ENCODE measurements at regions of chr15 and their contacts with region 1.

Region 1: DNA sequence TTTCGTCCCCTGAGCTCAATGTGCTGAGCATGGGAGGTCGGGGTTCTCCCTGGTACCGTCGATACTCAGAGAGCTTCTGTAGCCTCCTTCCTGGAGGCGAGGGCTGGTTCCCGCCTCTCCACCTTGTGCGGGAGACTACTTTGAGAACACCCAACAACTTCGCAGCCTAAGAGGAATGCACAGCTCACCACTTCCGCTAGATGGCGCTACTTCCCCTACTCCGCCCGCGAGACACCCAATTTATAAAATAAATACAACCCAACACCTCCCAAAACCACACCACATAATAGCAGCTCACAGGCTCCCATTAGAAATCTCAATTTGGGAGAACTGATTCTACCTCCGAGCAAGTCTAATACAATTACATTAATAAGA is 1.2 kb downstream of the RGMA start:
- DNase-seq: peak; percentile 68 to 87
- ATAC-seq: peak; percentile 61 to 71 (median 69)
- H3K4me3 ChIP-seq: peak overlapping the region; percentile 80
- H3K27ac ChIP-seq: peak overlapping the region; percentile 90
- H3K4me1 ChIP-seq: peaks cover 37% of the 10 kb centered on the region
- H3K27me3 ChIP-seq: peaks cover 0 to 3% (median 0%) of the 10 kb centered on the region in 3 donors
- CTCF ChIP-seq: peak; percentile 95

Region 2: DNA sequence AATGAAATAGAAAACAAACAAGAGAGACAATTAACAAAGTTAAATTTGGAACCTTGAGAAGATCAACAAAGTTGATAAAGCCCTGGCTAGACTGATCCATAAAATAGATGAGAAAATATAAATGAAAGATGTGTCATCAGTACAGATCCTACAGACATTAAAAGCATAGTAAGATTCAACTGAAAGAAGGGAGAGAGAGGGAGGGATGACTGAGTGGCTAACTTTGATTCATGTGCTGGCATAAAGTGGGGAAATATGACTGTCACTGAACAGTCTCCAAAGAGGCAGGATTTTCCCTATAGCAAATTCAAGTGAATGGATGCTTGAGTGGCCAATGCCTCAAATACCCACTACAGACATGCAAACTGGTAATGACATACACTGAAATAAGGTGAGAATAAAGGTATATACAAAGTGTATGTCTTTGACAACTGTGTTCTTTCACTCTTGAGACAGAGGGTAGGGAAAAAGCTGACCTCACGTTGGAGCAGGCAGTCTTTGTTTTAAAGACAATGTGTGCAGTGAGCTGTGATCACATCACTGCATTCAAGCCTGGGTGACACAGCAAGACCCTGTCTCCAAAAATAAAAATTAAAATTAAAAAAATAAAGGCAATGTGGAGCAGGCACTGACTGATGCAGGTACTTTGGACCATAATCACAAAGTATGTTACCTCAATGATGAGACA is 223.5 kb before region 1 on chr15:
- intact Hi-C with region 1: no loop called
- DNase-seq: no peak
- ATAC-seq: no peak
- H3K4me3 ChIP-seq: no peak overlapping the region
- H3K27ac ChIP-seq: no peak overlapping the region
- H3K4me1 ChIP-seq: peaks cover 6% of the 10 kb centered on the region
- H3K27me3 ChIP-seq: no peaks in the 10 kb centered on the region
- CTCF ChIP-seq: no peak

Region 3: DNA sequence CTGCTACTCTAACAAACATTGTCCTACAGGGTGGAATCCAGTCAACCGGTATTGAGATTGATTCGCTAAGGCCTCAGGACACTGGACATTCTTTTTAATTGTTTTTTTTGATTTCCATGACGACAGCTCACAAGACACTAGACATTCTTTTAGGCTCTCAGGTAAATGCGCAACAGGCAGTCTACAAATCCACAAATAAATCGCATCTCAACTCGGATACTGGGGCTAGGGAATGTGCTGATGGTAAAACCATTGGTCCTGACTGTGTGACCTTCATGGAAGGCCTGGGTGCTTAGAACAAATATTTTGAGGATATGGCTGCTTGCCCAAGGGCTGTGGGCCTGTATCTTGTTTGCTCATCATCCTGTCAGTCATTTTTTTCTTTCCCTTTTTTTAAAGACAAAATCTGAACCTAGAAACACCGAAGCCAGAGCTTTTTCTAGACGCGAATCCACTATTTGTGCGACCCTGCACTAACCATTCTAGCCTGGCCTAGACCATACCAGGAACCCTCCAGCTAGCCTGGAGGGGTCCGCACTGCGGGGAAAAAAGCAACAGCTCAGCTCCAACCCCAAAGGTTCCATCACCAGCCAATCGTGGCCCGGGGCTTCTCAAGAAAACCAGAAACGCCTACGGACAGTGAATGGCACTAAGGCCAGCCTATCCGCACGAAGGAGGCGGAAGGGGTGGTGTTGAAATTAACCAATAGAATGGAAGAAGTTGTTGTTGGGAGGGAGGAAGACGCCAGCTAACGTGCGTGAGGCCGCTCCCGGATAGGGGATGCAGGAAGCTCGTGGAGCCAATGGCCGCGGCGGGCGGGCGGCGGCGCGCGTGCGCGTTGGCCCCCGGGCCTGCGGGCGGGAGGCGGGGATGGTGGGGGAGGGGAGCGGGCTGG is 205.8 kb before region 1 on chr15:
- intact Hi-C with region 1: no loop called
- DNase-seq: peak; percentile 99
- ATAC-seq: peak; percentile 90 to 97 (median 96)
- H3K4me3 ChIP-seq: peak overlapping the region; percentile 83
- H3K27ac ChIP-seq: peak overlapping the region; percentile 90
- H3K4me1 ChIP-seq: peaks cover 33% of the 10 kb centered on the region
- H3K27me3 ChIP-seq: no peaks in the 10 kb centered on the region
- CTCF ChIP-seq: no peak

Region 4: DNA sequence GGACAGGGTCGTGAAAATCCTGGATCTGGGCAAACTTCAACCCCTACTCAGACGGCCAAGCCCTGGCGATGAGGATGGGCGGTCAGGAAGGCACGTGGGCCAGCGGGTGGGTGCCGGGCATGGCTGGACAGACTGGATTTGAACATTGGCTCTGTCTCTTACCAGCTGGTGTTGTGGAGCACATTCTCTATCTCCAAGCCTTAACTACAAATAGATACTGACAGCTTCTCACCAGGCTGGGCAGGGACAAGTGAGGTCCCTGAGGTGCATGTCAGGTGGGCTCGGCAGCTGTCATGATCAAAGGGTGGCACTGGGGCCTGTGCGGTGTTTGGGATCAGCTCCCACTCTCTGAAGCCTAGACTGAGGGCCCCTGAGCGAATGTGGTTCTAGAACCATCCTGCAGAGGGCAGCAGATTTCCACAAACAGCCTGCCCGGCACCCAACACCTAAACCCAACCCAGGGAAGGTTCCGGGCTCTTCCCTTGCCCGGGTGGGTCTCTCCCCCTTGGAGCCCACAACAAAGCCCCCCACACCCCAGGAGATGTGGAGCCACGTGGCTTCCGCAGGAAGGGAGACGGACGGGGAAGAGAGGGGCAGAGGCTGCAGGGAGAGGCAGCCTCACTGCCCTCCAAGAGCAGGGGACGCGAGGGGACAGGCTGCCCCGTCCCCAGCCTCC is 57.2 kb before region 1 on chr15:
- intact Hi-C with region 1: loop called (anchors 2 to 5 kb)
- DNase-seq: peak; percentile 71 to 87
- ATAC-seq: peak; percentile 60 to 71 (median 64)
- H3K4me3 ChIP-seq: peak overlapping the region; percentile 37
- H3K27ac ChIP-seq: peak overlapping the region; percentile 90
- H3K4me1 ChIP-seq: peaks cover 55% of the 10 kb centered on the region
- H3K27me3 ChIP-seq: no peaks in the 10 kb centered on the region
- CTCF ChIP-seq: peak; percentile 83

Region 5: DNA sequence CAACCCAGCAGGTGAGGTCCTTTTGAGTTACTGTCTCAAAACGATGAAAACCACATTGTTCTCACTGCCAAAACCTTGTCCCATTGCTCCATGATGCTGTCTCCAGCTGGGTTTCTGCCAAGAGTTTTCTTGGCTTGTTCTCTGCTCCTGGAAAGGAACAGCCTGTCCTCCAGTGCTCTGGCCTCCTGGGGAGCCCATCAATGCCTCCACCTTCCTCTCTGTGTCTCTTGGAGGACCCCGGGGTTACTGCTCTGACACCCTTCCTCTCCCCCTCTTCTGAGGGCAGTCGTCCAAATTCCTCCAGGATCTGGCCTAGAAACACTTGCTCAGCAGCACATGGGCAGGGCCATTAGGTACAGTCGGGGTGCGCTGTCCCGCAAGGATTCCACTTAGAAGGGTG is 65.1 kb after region 1 on chr15:
- intact Hi-C with region 1: loop called in 1 of 2 experiments (anchors 2 kb)
- DNase-seq: peak; percentile 66 to 86
- ATAC-seq: peak; percentile 39 to 88 (median 84)
- H3K4me3 ChIP-seq: no peak overlapping the region
- H3K27ac ChIP-seq: no peak overlapping the region
- H3K4me1 ChIP-seq: peaks cover 16% of the 10 kb centered on the region
- H3K27me3 ChIP-seq: no peaks in the 10 kb centered on the region
- CTCF ChIP-seq: no peak

Region 6: DNA sequence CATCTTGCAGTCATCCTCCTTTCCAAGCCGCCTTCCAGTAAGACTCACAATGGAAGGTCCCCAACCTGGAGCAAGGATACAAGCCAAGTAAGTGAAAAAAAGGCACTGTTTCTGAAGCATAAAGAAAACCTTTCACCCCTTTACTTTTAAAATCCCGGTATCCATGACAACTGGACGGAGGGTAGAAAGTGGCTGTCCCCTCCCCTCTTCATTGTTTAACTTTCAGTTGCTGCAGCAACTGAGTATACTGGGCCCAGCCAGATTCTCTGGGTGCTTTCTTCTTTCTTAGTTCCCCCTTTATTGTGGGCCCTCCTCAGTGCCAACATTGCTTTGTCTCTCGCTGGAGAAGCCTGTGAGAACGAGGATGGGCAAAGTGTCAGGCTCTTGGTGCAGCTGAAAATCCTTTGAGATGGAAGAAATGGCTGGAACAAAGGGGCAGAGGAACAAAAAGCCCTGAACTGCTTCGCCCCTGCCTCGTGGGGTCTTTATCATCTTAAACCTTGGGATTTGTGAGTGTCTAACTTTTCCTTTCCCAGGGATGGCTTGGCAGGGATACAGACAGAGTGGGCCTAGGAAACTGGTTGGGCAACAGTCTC is 225.2 kb after region 1 on chr15:
- intact Hi-C with region 1: loop called in 1 of 2 experiments (anchors 10 kb)
- DNase-seq: no peak
- ATAC-seq: no peak
- H3K4me3 ChIP-seq: no peak overlapping the region
- H3K27ac ChIP-seq: no peak overlapping the region
- H3K4me1 ChIP-seq: no peaks in the 10 kb centered on the region
- H3K27me3 ChIP-seq: no peaks in the 10 kb centered on the region
- CTCF ChIP-seq: no peak

Region 7: GRCh38 chr15:93485438-93486327 is 397.9 kb after region 1 on chr15:
- intact Hi-C with region 1: loop called in 1 of 2 experiments (anchors 10 kb)
- DNase-seq: peak; percentile 47 to 84
- ATAC-seq: peak; percentile 40 to 76 (median 58)
- H3K4me3 ChIP-seq: no peak overlapping the region
- H3K27ac ChIP-seq: peak overlapping the region; percentile 80
- H3K4me1 ChIP-seq: peaks cover 18% of the 10 kb centered on the region
- H3K27me3 ChIP-seq: no peaks in the 10 kb centered on the region
- CTCF ChIP-seq: no peak

Region 8: DNA sequence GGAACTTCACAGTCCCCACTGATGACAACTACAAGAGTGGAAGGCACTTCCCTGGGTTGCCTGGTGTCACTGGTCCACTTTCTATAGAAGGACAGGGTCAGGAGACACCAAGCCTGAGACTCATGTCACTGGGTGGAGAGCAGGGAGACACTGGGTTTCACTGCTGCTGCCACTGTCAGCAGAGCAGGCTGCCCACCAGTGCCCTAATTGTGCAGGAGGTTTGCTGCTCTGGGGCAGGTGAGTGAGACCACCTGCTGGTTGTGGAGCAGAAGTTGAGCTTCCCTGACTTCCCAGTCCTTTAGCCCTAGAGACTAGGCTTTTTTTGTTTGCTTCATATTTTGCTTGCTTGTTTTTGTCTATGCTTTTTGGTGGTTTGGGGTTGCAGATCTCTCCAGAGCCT is 529.6 kb after region 1 on chr15:
- intact Hi-C with region 1: loop called in 1 of 2 experiments (anchors 10 kb)
- DNase-seq: peak; percentile 14 to 57
- ATAC-seq: peak; percentile 65 to 92 (median 86)
- H3K4me3 ChIP-seq: no peak overlapping the region
- H3K27ac ChIP-seq: no peak overlapping the region
- H3K4me1 ChIP-seq: no peaks in the 10 kb centered on the region
- H3K27me3 ChIP-seq: no peaks in the 10 kb centered on the region
- CTCF ChIP-seq: peak; percentile 49